Esophagus muscularis mucosa (tissue), 4 donors: ENCODE measurements at regions of chr19 and their contacts with region 1.

Region 1: GRCh38 chr19:53906211-53907192 is 2.6 kb upstream of the CACNG7 start:
- DNase-seq: no peak
- H3K4me3 ChIP-seq: peak overlapping the region in 1 of 4 donors; percentile 6
- H3K27ac ChIP-seq: no peak overlapping the region
- H3K4me1 ChIP-seq: peaks cover 8 to 38% (median 33%) of the 10 kb centered on the region in 4 donors
- H3K27me3 ChIP-seq: peaks cover 0 to 98% (median 47%) of the 10 kb centered on the region in 4 donors
- CTCF ChIP-seq: peak; percentile 54 to 96 (median 73)
- EP300 ChIP-seq: no peak
- POLR2A ChIP-seq: no peak

Region 2: GRCh38 chr19:53881482-53882390 is 24.8 kb before region 1 on chr19 and contains the start of gene PRKCG:
- intact Hi-C with region 1: no loop called
- DNase-seq: no peak
- H3K4me3 ChIP-seq: peak within 1 kb of the TSS; percentile 35 to 51 (median 38)
- H3K27ac ChIP-seq: no peak within 1 kb of the TSS
- H3K4me1 ChIP-seq: peaks cover 22 to 49% (median 39%) of the 10 kb centered on the region in 4 donors
- H3K27me3 ChIP-seq: peaks cover 4 to 63% (median 31%) of the 10 kb centered on the region in 4 donors
- CTCF ChIP-seq: peak; percentile 47 to 62 (median 50)
- EP300 ChIP-seq: no peak
- POLR2A ChIP-seq: no peak
- total RNA-seq, gene PRKCG: not detected

Region 3: DNA sequence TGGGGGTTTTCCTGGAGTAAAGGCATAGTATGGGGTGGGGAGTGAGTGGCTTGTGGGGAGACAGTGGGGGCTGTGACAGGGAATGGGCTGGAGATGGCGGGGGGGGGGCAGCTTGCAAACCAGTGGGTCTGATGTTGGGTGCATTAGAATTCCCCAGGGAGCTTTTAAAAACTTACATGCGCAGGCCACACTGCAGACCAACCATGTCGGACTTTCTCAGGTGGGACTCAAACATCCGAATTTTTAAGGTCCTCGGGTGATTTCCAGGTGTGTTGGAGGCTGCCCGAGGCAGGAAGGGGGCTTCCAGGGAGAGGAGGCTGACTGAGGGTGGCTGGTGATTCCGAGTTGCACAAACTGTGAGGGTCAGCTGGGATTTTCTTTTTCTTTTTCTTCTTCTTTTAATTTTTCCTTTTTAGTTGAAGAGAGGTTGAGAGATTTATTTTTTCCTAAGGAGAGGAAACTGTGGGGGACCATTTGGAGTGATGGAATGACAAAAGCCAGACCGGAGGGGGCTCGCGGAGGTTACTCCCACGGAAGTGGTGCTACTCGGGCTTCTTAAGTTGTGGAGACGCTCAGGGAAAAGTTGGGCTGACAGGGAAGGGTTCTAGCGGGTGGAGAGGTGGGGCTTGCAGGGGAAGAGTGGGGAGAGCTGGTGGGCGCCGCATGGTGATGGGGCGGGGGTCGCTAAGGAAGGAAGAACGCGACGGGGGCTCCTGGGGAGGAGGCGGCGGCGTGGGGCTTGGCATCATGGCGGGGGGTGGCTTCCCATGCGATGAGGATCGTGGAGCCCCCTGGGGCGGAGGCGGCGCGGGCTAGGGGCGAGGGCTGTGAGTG is 55.2 kb after region 1 on chr19:
- intact Hi-C with region 1: no loop called
- DNase-seq: no peak
- H3K4me3 ChIP-seq: no peak overlapping the region
- H3K27ac ChIP-seq: no peak overlapping the region
- H3K4me1 ChIP-seq: peaks cover 0 to 6% (median 5%) of the 10 kb centered on the region in 4 donors
- H3K27me3 ChIP-seq: peaks cover 0 to 98% (median 51%) of the 10 kb centered on the region in 4 donors
- CTCF ChIP-seq: no peak
- EP300 ChIP-seq: no peak
- POLR2A ChIP-seq: no peak

Region 4: GRCh38 chr19:54023191-54023590 is 116.7 kb after region 1 on chr19:
- intact Hi-C with region 1: loop called (anchors 5 kb)
- DNase-seq: no peak
- H3K4me3 ChIP-seq: no peak overlapping the region
- H3K27ac ChIP-seq: no peak overlapping the region
- H3K4me1 ChIP-seq: peaks cover 0 to 8% (median 7%) of the 10 kb centered on the region in 4 donors
- H3K27me3 ChIP-seq: peaks cover 0 to 65% (median 5%) of the 10 kb centered on the region in 4 donors
- CTCF ChIP-seq: no peak
- EP300 ChIP-seq: no peak
- POLR2A ChIP-seq: no peak